Activated B cell treated with CpG ODN at 0.5 μM for 24 hours (primary cell): ENCODE measurements at regions of chr13 and their contacts with region 1.

Region 1: DNA sequence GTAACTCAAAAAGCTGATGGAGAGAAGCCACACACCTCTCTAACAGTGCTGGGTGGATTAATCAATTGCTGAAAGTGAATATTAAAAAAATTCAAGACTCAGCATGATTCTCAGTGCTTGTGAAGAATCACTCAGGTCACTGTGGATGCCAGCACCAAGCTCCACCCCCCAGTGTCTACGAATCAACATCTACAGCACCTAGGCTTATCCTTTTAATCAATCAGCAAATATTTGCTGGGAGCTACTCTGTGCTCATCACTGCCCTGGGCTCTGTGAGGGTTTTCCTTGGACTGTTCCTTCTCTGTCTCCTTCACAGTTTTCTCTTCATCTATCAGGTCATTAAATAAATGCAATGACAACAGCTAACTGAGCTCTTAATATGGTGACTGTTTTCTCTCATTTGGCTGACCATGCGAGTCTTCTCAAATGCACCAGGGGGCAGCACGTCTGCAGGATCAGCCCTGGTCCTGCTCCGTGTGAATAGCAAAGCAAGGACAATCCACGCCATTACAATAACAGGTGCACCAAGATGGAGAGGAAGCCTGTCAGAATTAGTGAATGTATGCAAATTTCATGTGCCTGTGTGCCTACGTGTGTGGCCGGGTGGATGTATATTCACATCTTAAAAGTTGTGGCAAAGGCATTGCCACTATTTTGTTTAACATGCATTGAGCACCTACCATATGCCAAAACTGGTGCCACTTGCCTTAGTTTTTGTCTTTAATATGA is 14.6 kb upstream of the C13orf42 start:
- DNase-seq: no peak
- ATAC-seq: peak; percentile 75
- H3K4me3 Mint-ChIP-seq: no peak overlapping the region
- H3K27ac Mint-ChIP-seq: no peak overlapping the region
- H3K4me1 Mint-ChIP-seq: peaks cover 3% of the 10 kb centered on the region
- H3K27me3 Mint-ChIP-seq: peaks cover 15% of the 10 kb centered on the region
- CTCF ChIP-seq: no peak

Region 2: DNA sequence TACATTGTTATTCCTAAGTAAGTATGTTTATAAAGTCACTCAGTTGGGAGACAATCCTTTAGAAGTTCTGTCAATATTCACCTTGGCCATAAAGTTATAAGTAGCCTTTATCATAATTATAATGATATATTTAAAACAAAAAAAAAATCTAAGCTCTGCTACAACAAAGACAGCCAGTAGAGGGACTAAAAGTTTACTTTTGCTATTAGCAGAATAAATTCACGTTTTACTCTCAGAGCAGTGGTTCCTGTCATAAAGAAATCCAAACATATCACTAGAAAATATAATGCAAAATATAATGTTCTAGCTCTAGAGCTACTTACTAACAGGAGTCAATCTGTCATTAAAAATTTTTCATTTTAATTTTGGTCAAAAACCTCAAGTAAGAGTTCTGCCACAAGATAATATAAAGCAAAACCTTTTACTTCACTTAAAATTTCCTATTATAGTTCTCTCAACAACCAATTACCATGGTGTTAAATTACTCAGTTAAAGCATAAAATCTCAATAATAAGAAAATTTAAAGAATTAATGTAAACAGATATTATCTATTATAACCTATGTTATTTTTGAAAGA is 309.4 kb after region 1 on chr13:
- CTCF ChIA-PET with region 1: no interaction called
- POLR2A ChIA-PET with region 1: no interaction called
- intact Hi-C with region 1: loop called (anchors 10 kb)
- DNase-seq: no peak
- ATAC-seq: peak; percentile 50
- H3K4me3 Mint-ChIP-seq: no peak overlapping the region
- H3K27ac Mint-ChIP-seq: no peak overlapping the region
- H3K4me1 Mint-ChIP-seq: peaks cover 3% of the 10 kb centered on the region
- H3K27me3 Mint-ChIP-seq: no peaks in the 10 kb centered on the region
- CTCF ChIP-seq: peak; percentile 46

Region 3: GRCh38 chr13:51797664-51798488 is 672.2 kb after region 1 on chr13:
- CTCF ChIA-PET with region 1: interaction called, 53 read pairs
- POLR2A ChIA-PET with region 1: no interaction called
- intact Hi-C with region 1: no loop called
- DNase-seq: no peak
- ATAC-seq: peak; percentile 45
- H3K4me3 Mint-ChIP-seq: no peak overlapping the region
- H3K27ac Mint-ChIP-seq: no peak overlapping the region
- H3K4me1 Mint-ChIP-seq: peaks cover 47% of the 10 kb centered on the region
- H3K27me3 Mint-ChIP-seq: no peaks in the 10 kb centered on the region
- CTCF ChIP-seq: no peak

Region 4: GRCh38 chr13:51832471-51833152 is 707.0 kb after region 1 on chr13:
- CTCF ChIA-PET with region 1: interaction called, 6 read pairs
- POLR2A ChIA-PET with region 1: no interaction called
- intact Hi-C with region 1: loop called (anchors 1 kb)
- DNase-seq: no peak
- ATAC-seq: peak; percentile 97
- H3K4me3 Mint-ChIP-seq: no peak overlapping the region
- H3K27ac Mint-ChIP-seq: no peak overlapping the region
- H3K4me1 Mint-ChIP-seq: peaks cover 31% of the 10 kb centered on the region
- H3K27me3 Mint-ChIP-seq: peaks cover 7% of the 10 kb centered on the region
- CTCF ChIP-seq: no peak

Region 5: DNA sequence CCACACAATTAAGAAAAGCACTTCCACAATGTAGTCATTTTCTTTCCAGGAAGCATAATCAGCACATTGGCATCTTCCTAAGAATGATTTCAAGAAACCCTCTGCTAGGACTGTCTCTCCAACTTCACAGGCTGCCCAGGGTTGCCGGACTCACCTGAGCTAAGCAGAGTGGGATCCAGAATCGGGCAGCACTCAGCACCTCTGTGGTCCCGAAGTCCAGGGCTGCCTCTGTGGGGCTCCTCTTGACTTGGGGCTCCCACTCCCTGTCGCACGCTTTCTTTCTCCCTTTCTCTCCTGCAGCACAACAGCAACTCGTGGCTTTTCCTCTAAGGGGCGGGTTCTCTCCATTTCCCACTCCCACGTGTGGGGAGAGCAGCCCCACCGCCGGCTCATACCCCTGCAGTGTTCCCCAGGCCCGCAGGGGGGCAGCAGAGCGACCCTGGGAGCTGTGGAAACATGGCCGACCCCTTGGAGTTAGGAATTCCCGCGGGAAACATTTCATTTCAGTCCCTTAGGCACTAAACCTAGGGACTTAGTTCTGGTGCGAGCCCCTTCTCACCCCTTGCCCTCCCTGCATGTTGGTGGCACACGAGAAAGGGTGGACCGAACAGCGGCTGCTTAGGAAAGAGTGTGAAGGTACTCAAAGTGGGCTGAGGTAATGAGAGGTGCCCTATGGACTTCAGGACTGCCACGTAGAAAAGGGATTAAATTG is 719.4 kb after region 1 on chr13 and contains the start of gene TMEM272:
- CTCF ChIA-PET with region 1: no interaction called
- POLR2A ChIA-PET with region 1: no interaction called
- intact Hi-C with region 1: loop called (anchors 1 kb)
- DNase-seq: peak; percentile 37
- ATAC-seq: peak; percentile 78
- H3K4me3 Mint-ChIP-seq: no peak within 1 kb of the TSS
- H3K27ac Mint-ChIP-seq: no peak within 1 kb of the TSS
- H3K4me1 Mint-ChIP-seq: peaks cover 2% of the 10 kb centered on the region
- H3K27me3 Mint-ChIP-seq: peaks cover 10% of the 10 kb centered on the region
- CTCF ChIP-seq: no peak
- total RNA-seq, gene TMEM272: not detected in 2 replicates